CD14-positive monocyte (primary cell): ENCODE measurements at regions of chr5 and their contacts with region 1.

Region 1: DNA sequence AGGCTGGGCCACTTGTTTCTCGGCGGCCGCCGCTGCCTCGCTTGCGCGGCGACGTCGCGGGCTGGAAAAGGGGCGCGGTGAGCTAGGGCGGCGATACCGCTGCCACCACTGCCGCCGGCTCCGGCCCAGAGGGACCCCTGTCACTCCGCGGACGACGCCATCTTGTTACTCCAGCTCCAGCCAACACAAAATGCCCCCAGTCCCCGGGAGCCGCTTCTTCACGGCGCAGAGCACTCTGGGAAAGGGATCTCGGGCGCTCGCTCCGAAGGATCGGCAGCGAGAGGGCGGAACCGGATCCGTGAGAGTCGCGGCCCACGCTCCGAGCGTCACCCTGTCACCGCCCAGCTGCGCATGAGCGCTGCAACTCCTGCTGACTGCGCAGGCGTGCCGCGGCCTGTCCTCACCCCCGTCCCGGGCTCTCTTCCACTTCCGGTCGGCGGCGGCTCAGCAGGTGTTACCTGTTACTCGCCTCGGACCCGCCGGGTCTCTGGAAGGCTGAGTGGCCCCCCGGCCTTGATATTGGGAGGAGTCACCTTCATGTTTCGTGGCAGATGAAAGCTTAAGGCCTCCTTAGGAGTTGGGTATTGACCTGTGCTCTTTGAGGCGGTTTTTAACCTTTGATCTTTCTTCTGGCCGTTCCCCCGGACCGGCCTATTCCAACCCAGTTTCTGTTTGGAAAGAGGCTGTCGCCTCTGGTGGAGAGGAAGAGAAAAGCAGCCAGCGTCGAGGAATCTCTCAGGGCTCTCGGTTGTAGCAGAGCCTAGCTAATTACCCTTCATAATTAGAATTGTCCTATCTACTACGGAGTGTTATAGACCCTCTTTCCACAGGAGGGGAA is at the start of gene CSNK1A1:
- DNase-seq: peak; percentile 98 to 100 (median 99)
- H3K4me3 ChIP-seq: peak within 1 kb of the TSS; percentile 88 to 100 (median 91)
- H3K4me3 Mint-ChIP-seq: peak within 1 kb of the TSS; percentile 97 to 98
- H3K27ac ChIP-seq: peak within 1 kb of the TSS; percentile 96 to 98
- H3K27ac Mint-ChIP-seq: peak within 1 kb of the TSS; percentile 99 to 100 (median 99)
- H3K4me1 ChIP-seq: peaks cover 19 to 33% of the 10 kb centered on the region in 2 donors
- H3K4me1 Mint-ChIP-seq: peaks cover 24% of the 10 kb centered on the region
- H3K27me3 ChIP-seq: no peaks in the 10 kb centered on the region
- H3K27me3 Mint-ChIP-seq: peaks cover 0 to 2% (median 0%) of the 10 kb centered on the region in 3 donors
- CTCF ChIP-seq: peak; percentile 88
- polyA plus RNA-seq, gene CSNK1A1: 75.7 to 131 (median 103) TPM

Region 2: GRCh38 chr5:149514512-149514911 is 36.9 kb before region 1 on chr5:
- intact Hi-C with region 1: loop called in 1 of 2 experiments (anchors 5 kb)
- DNase-seq: no peak
- H3K4me3 ChIP-seq: no peak overlapping the region
- H3K4me3 Mint-ChIP-seq: no peak overlapping the region
- H3K27ac ChIP-seq: peak overlapping the region in 1 of 2 donors; percentile 1
- H3K27ac Mint-ChIP-seq: peak overlapping the region in 1 of 7 donors; percentile 50
- H3K4me1 ChIP-seq: no peaks in the 10 kb centered on the region
- H3K4me1 Mint-ChIP-seq: peaks cover 7% of the 10 kb centered on the region
- H3K27me3 ChIP-seq: no peaks in the 10 kb centered on the region
- H3K27me3 Mint-ChIP-seq: no peaks in the 10 kb centered on the region
- CTCF ChIP-seq: no peak

Region 3: DNA sequence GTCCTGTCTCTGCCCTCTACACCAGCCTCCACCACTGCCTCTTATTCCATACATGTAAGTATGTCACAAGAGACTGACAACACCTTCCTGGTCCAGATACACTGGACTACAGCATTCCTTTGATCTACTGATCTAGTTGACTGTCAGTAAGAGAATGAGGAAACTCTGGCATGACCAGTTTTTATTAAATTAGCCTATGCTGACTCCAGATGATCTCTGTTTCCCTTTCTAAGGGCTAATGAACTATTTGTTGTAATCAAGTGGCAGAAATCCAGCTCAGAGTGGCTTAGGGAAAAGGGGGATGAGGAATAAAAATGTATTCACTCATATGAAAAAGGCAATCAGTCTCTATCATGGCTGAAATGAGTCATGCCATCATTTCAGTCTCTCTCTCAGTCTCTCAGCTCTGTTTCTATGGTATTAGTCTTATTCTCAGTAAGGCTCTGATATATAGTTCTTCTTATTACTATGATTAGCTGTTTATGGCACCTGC is 35.4 kb after region 1 on chr5:
- intact Hi-C with region 1: no loop called
- DNase-seq: no peak
- H3K4me3 ChIP-seq: no peak overlapping the region
- H3K4me3 Mint-ChIP-seq: no peak overlapping the region
- H3K27ac ChIP-seq: no peak overlapping the region
- H3K27ac Mint-ChIP-seq: no peak overlapping the region
- H3K4me1 ChIP-seq: no peaks in the 10 kb centered on the region
- H3K4me1 Mint-ChIP-seq: no peaks in the 10 kb centered on the region
- H3K27me3 ChIP-seq: peaks cover 4 to 5% of the 10 kb centered on the region in 2 donors
- H3K27me3 Mint-ChIP-seq: peaks cover 4 to 7% (median 6%) of the 10 kb centered on the region in 3 donors
- CTCF ChIP-seq: no peak

Region 4: DNA sequence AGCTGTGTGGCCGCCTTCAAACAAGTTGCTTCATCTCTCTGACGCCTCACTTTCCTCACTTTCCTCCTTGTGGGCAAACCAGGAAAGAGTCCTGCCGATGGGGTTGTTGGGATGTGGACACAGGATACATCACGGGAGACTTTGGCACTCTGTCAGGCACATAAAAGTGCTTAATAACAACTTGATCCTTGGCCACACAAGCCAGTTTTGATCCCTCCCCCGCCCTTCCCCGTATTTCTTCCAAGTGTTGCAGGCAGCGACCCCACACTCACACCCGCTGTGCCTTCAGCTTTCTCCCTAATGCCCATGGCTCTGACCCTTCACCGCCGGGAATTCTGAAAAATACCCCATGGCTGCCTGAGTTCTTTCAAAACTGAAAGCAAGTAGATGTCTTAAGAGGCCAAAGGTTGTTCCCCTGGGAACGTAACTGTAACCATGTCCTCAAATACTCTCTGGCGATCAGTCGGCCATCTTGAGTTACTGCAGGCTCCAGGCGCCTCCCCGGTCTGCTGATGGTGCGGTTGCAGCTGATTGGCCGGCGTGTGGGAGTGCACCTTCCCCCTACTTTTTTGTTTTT is 89.7 kb after region 1 on chr5:
- intact Hi-C with region 1: no loop called
- DNase-seq: no peak
- H3K4me3 ChIP-seq: no peak overlapping the region
- H3K4me3 Mint-ChIP-seq: no peak overlapping the region
- H3K27ac ChIP-seq: no peak overlapping the region
- H3K27ac Mint-ChIP-seq: no peak overlapping the region
- H3K4me1 ChIP-seq: peaks cover 0 to 4% of the 10 kb centered on the region in 2 donors
- H3K4me1 Mint-ChIP-seq: peaks cover 7% of the 10 kb centered on the region
- H3K27me3 ChIP-seq: no peaks in the 10 kb centered on the region
- H3K27me3 Mint-ChIP-seq: peaks cover 0 to 2% (median 0%) of the 10 kb centered on the region in 3 donors
- CTCF ChIP-seq: no peak

Region 5: DNA sequence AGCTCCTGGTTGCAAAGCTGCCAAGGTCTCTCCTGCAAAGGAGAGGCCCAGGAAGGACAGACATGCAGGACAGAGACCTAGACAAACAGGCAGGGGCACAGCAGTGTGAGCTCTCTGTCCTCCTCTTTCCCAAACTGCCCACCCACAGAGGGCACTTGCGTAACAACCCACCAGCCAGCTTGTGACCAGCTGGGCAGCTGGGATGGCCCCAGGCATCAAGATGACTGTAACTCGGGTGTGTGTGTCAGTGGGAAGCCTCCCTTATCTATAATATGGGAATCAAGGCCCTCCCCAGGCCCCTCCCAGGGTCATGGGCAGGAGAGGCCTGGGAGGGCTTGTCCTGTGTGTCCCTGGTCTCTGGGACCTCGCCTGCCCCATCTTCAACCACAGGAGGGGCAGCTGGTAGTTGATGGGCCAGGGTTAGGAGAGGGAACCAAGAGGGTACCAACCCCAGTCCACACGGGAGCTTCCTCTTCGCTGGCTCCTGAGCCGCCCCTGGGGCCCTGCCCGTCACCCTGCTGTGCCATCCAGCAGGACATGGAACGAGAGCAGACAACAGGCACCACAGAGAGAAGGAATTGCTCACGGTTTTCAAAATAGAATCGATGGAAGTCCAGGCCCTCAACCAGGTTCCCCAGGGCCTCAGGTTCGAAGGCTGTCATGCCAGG is 676.3 kb after region 1 on chr5:
- intact Hi-C with region 1: no loop called
- DNase-seq: no peak
- H3K4me3 ChIP-seq: no peak overlapping the region
- H3K4me3 Mint-ChIP-seq: no peak overlapping the region
- H3K27ac ChIP-seq: no peak overlapping the region
- H3K27ac Mint-ChIP-seq: no peak overlapping the region
- H3K4me1 ChIP-seq: no peaks in the 10 kb centered on the region
- H3K4me1 Mint-ChIP-seq: peaks cover 8% of the 10 kb centered on the region
- H3K27me3 ChIP-seq: no peaks in the 10 kb centered on the region
- H3K27me3 Mint-ChIP-seq: peaks cover 1 to 2% (median 1%) of the 10 kb centered on the region in 3 donors
- CTCF ChIP-seq: no peak